CD4-positive, alpha-beta T cell (primary cell): ENCODE measurements at regions of chr17 and their contacts with region 1.

Region 1: DNA sequence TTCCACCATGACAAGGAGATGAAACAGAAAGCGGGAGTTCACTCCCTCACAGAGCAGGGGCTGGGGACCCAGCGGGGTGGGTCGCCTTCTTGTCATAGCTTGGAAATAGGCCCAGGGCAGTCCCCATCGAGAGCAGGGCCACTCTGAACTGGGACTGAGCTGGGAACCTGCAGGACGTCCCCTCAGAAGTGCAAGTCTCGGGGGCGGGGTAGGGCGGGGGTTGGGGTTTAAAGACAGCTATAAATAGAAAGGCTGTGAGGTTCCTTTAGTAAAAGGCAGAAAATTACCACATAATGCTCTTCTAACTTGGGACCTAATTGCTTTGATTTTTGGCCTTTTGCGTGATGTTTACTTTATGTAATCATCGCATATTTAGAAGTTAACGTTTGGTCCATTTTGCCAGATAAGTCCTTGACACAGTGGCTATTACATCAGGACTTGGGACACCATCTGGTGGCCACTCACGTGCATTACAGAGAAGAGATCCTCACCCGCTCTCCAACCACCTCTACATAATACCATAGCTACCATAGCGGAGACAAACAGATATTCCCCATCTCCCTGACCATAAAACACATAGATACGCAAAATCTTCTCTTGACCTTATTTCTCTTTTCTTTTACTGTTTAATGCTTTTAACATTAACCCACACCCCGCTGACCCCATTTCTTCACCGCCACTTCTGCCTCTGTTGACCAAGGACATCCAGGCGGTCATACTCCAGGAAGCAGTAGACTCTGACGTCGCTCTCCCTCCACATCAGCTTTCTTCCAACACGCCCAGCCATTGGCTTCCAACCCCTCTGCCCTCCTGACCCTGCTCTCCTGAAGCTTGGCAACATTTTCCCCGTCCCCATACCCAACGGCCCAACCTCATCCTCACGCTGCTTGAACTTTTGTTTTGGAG is 27.5 kb upstream of the PIK3R6 start:
- DNase-seq: peak in 12 of 14 experiments; percentile 23 to 79 (median 42)
- ATAC-seq: peak; percentile 20
- H3K4me3 ChIP-seq: no peak overlapping the region
- H3K4me3 Mint-ChIP-seq: peak overlapping the region; percentile 1
- H3K27ac ChIP-seq: no peak overlapping the region
- H3K27ac Mint-ChIP-seq: peak overlapping the region; percentile 93
- H3K4me1 ChIP-seq: peaks cover 61% of the 10 kb centered on the region
- H3K4me1 Mint-ChIP-seq: peaks cover 58% of the 10 kb centered on the region
- H3K27me3 ChIP-seq: no peaks in the 10 kb centered on the region
- H3K27me3 Mint-ChIP-seq: no peaks in the 10 kb centered on the region
- CTCF ChIP-seq: peak; percentile 77

Region 2: GRCh38 chr17:7035591-7036368 is 1859.1 kb before region 1 on chr17 and contains the start of gene SLC16A13:
- CTCF ChIA-PET with region 1: no interaction called
- POLR2A ChIA-PET with region 1: no interaction called
- intact Hi-C with region 1: loop called in 1 of 2 experiments (anchors 5 kb)
- DNase-seq: peak; percentile 94 to 100 (median 98)
- ATAC-seq: peak; percentile 90
- H3K4me3 ChIP-seq: peak within 1 kb of the TSS; percentile 99
- H3K4me3 Mint-ChIP-seq: peak within 1 kb of the TSS; percentile 91
- H3K27ac ChIP-seq: peak within 1 kb of the TSS; percentile 84 to 93
- H3K27ac Mint-ChIP-seq: peak within 1 kb of the TSS; percentile 99
- H3K4me1 ChIP-seq: peaks cover 57% of the 10 kb centered on the region
- H3K4me1 Mint-ChIP-seq: peaks cover 63% of the 10 kb centered on the region
- H3K27me3 ChIP-seq: no peaks in the 10 kb centered on the region
- H3K27me3 Mint-ChIP-seq: no peaks in the 10 kb centered on the region
- CTCF ChIP-seq: no peak
- total RNA-seq, gene SLC16A13: 2.3 to 2.4 TPM

Region 3: GRCh38 chr17:8409966-8410864 is 484.7 kb before region 1 on chr17:
- CTCF ChIA-PET with region 1: no interaction called
- POLR2A ChIA-PET with region 1: no interaction called
- intact Hi-C with region 1: loop called in 1 of 2 experiments (anchors 10 kb)
- DNase-seq: peak; percentile 65 to 91 (median 75)
- ATAC-seq: peak; percentile 85
- H3K4me3 ChIP-seq: no peak overlapping the region
- H3K4me3 Mint-ChIP-seq: no peak overlapping the region
- H3K27ac ChIP-seq: no peak overlapping the region
- H3K27ac Mint-ChIP-seq: no peak overlapping the region
- H3K4me1 ChIP-seq: peaks cover 16% of the 10 kb centered on the region
- H3K4me1 Mint-ChIP-seq: peaks cover 10% of the 10 kb centered on the region
- H3K27me3 ChIP-seq: peaks cover 0 to 7% of the 10 kb centered on the region in 2 experiments
- H3K27me3 Mint-ChIP-seq: peaks cover 9% of the 10 kb centered on the region
- CTCF ChIP-seq: peak; percentile 96

Region 4: GRCh38 chr17:8698162-8699061 is 196.5 kb before region 1 on chr17:
- CTCF ChIA-PET with region 1: no interaction called
- POLR2A ChIA-PET with region 1: no interaction called
- intact Hi-C with region 1: no loop called
- DNase-seq: no peak
- ATAC-seq: no peak
- H3K4me3 ChIP-seq: no peak overlapping the region
- H3K4me3 Mint-ChIP-seq: no peak overlapping the region
- H3K27ac ChIP-seq: no peak overlapping the region
- H3K27ac Mint-ChIP-seq: no peak overlapping the region
- H3K4me1 ChIP-seq: peaks cover 3% of the 10 kb centered on the region
- H3K4me1 Mint-ChIP-seq: no peaks in the 10 kb centered on the region
- H3K27me3 ChIP-seq: peaks cover 2 to 8% of the 10 kb centered on the region in 2 experiments
- H3K27me3 Mint-ChIP-seq: peaks cover 30% of the 10 kb centered on the region
- CTCF ChIP-seq: no peak

Region 5: DNA sequence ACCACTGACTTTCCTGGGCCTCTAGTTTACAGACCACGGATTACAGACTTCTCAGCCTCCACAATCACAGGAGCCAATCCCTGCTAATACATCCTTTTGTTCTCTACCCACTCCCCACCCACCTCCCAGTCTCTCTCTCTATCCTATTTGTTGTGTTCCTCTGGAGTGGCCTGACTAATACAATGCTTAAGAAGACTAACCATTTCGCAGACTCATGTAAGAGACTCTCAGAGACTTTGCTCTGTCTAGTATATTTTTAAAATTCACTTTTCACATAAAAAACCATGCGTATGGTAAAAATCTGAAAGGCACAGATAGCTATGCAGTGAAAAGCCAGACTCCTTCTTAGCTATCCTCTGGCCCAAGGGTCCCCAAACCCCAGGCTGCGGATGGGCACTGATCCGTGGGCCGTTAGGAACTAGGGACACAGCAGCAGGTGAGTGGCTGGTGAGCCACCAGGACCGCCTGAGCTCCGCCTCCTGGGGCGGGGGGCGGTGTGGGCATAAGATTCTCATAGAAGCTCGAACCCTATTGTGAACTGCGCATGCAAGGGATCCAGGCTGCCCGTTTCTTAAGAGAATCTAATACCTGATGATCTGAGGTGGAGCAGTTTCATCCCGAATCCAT is 35.0 kb before region 1 on chr17:
- CTCF ChIA-PET with region 1: no interaction called
- POLR2A ChIA-PET with region 1: no interaction called
- intact Hi-C with region 1: no loop called
- DNase-seq: no peak
- ATAC-seq: no peak
- H3K4me3 ChIP-seq: no peak overlapping the region
- H3K4me3 Mint-ChIP-seq: no peak overlapping the region
- H3K27ac ChIP-seq: no peak overlapping the region
- H3K27ac Mint-ChIP-seq: no peak overlapping the region
- H3K4me1 ChIP-seq: peaks cover 31% of the 10 kb centered on the region
- H3K4me1 Mint-ChIP-seq: peaks cover 43% of the 10 kb centered on the region
- H3K27me3 ChIP-seq: no peaks in the 10 kb centered on the region
- H3K27me3 Mint-ChIP-seq: no peaks in the 10 kb centered on the region
- CTCF ChIP-seq: no peak

Region 6: GRCh38 chr17:8941520-8941919 is 46.6 kb after region 1 on chr17:
- CTCF ChIA-PET with region 1: interaction called, 3 read pairs
- POLR2A ChIA-PET with region 1: interaction called, 26 read pairs
- intact Hi-C with region 1: loop called in 1 of 2 experiments (anchors 5 kb)
- DNase-seq: peak; percentile 44 to 88 (median 62)
- ATAC-seq: peak; percentile 63
- H3K4me3 ChIP-seq: peak overlapping the region; percentile 21
- H3K4me3 Mint-ChIP-seq: peak overlapping the region; percentile 56
- H3K27ac ChIP-seq: peak overlapping the region; percentile 44 to 56
- H3K27ac Mint-ChIP-seq: peak overlapping the region; percentile 94
- H3K4me1 ChIP-seq: peaks cover 68% of the 10 kb centered on the region
- H3K4me1 Mint-ChIP-seq: peaks cover 93% of the 10 kb centered on the region
- H3K27me3 ChIP-seq: no peaks in the 10 kb centered on the region
- H3K27me3 Mint-ChIP-seq: no peaks in the 10 kb centered on the region
- CTCF ChIP-seq: no peak

Region 7: GRCh38 chr17:8991514-8992285 is 96.8 kb after region 1 on chr17:
- CTCF ChIA-PET with region 1: interaction called, 16 read pairs
- POLR2A ChIA-PET with region 1: no interaction called
- intact Hi-C with region 1: loop called in 1 of 2 experiments (anchors 2 kb)
- DNase-seq: peak; percentile 48 to 82 (median 54)
- ATAC-seq: peak; percentile 89
- H3K4me3 ChIP-seq: no peak overlapping the region
- H3K4me3 Mint-ChIP-seq: no peak overlapping the region
- H3K27ac ChIP-seq: no peak overlapping the region
- H3K27ac Mint-ChIP-seq: no peak overlapping the region
- H3K4me1 ChIP-seq: peaks cover 5% of the 10 kb centered on the region
- H3K4me1 Mint-ChIP-seq: peaks cover 5% of the 10 kb centered on the region
- H3K27me3 ChIP-seq: no peaks in the 10 kb centered on the region
- H3K27me3 Mint-ChIP-seq: peaks cover 3% of the 10 kb centered on the region
- CTCF ChIP-seq: peak; percentile 79